ENCODE measurements at regions of chr19 and their contacts with region 1.

Region 1: GRCh38 chr19:6801485-6802086 is 29.1 kb downstream of the VAV1 start:
- DNase-seq: peak; percentile 75
- H3K4me3 Mint-ChIP-seq: peak overlapping the region; percentile 85
- H3K27ac Mint-ChIP-seq: peak overlapping the region; percentile 97
- H3K4me1 Mint-ChIP-seq: peaks cover 46% of the 10 kb centered on the region
- H3K27me3 Mint-ChIP-seq: no peaks in the 10 kb centered on the region

Region 2: DNA sequence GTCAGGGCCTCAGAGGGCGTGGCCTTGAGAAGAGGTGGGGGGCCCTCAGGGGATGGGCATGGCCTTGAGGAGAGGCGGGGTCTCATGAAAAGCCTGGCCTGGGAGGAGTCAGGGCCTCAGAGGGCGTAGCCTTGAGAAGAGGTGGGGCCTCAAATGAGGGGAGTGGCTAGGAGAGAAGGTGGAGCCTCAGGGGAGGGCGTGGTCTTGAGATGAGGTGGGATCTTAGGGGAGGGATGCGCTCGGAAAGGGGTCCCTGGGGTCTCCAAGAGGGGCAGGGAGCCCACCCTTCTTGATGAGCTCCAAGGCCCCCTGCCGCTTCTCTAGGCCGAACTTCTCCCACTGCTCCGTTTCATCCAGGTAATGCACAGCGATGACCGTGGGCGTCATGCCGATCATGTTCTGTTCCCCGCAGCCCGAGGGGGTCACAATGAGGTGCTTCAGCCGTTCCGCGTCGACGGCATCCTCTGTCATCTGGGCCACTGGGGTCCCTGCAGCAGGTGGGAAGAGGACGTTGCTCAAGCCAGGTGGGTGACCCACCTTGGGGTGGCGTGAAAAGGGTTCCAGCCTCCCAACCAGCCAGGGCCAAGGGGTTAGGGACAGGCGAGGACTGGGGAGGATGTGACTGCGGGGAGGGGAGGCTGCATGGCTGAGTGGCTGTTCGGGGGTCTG is 107.3 kb before region 1 on chr19:
- intact Hi-C with region 1: no loop called
- DNase-seq: no peak
- H3K4me3 Mint-ChIP-seq: no peak overlapping the region
- H3K27ac Mint-ChIP-seq: no peak overlapping the region
- H3K4me1 Mint-ChIP-seq: peaks cover 10% of the 10 kb centered on the region
- H3K27me3 Mint-ChIP-seq: peaks cover 2% of the 10 kb centered on the region

Region 3: DNA sequence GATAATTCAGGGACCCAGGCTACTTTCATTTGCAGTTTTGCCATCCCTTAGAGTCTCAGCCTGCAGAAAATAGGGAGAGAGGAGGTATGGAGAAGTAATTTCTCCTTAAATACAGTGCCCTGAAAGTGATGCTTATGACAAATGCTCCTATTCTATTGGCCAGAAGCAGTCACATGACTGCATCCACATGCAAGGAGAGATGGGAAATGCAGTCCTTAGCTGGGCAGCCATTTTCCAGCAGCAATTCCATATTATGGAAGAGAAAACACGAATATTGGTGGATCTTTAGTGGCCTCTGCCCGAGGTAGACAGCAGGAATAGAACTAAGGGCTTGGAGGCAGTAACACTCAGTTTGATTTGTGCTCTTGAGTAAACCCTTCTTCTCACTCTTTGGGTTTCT is 10.3 kb after region 1 on chr19:
- intact Hi-C with region 1: loop called (anchors 1 kb)
- DNase-seq: no peak
- H3K4me3 Mint-ChIP-seq: no peak overlapping the region
- H3K27ac Mint-ChIP-seq: no peak overlapping the region
- H3K4me1 Mint-ChIP-seq: peaks cover 37% of the 10 kb centered on the region
- H3K27me3 Mint-ChIP-seq: no peaks in the 10 kb centered on the region

Measured in activated T-helper 2 cell treated with anti-CD3 and anti-CD28 coated beads, Interferon-gamma antibody, Interleukin-2, Interleukin-4, amounts not matched to agents 10 μg/mL and 5 μg/mL and 100 μg/mL, durations not matched to agents 14 hours and 24 hours and 36 hours (primary cell).